OCI-LY7 (cell line): ENCODE measurements at regions of chr9 and their contacts with region 1.

Region 1: GRCh38 chr9:89602978-89603766 is 1.6 kb upstream of the GADD45G start:
- DNase-seq: peak; percentile 84
- H3K4me3 ChIP-seq: no peak overlapping the region
- H3K27ac ChIP-seq: no peak overlapping the region
- H3K4me1 ChIP-seq: peaks cover 13% of the 10 kb centered on the region
- CTCF ChIP-seq: peak; percentile 93

Region 2: GRCh38 chr9:89564352-89564878 is 38.8 kb before region 1 on chr9:
- CTCF ChIA-PET with region 1: no interaction called
- POLR2A ChIA-PET with region 1: no interaction called
- intact Hi-C with region 1: no loop called
- DNase-seq: peak; percentile 62
- H3K4me3 ChIP-seq: no peak overlapping the region
- H3K27ac ChIP-seq: no peak overlapping the region
- H3K4me1 ChIP-seq: peaks cover 3% of the 10 kb centered on the region
- CTCF ChIP-seq: peak; percentile 51; the same call in 1 of the 2 replicates

Region 3: DNA sequence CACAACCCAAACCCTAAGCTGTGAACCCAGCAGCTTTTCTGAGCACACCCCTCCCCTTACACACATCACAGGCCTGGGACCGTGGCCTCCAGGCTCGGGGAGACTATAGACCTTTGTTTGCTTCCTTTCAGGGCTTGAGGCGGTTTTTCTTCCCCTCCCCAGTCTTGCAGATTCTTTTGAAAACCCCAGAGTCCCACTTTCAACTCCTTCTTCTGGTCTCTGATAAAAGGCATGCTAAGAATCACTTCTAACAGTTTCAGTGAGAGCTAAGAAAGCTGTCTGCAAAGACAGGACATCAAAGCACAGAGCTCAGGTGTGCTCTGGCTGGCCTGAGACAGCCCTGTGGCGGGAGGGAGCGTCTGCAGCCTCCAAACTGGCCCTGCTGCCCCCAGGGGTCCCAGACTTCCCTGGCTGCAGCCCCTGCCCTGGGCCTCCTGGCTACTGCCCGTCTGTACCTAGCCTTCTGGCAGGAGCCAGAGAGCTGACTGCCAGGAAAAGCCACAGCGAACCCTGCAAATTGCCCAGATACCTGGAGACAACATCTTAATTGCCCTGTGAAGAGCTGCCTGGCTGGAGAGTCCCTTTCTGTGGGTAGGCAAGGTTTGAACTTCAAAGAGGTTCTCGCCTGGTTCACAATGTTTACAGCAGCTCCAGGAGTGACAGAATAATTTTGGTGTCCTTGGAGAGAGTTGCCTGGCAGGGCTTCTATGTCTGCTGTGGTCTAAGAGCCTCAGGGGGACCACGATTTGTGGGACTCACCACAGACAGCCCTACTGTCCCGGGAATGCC is 140.6 kb after region 1 on chr9:
- CTCF ChIA-PET with region 1: no interaction called
- POLR2A ChIA-PET with region 1: no interaction called
- intact Hi-C with region 1: loop called (anchors 5 kb)
- DNase-seq: peak; percentile 78
- H3K4me3 ChIP-seq: peak overlapping the region; percentile 24
- H3K27ac ChIP-seq: peak overlapping the region; percentile 93
- H3K4me1 ChIP-seq: peaks cover 80% of the 10 kb centered on the region
- CTCF ChIP-seq: no peak

Region 4: GRCh38 chr9:89879701-89880100 is 276.5 kb after region 1 on chr9:
- CTCF ChIA-PET with region 1: no interaction called
- POLR2A ChIA-PET with region 1: no interaction called
- intact Hi-C with region 1: loop called (anchors 2 kb)
- DNase-seq: no peak
- H3K4me3 ChIP-seq: no peak overlapping the region
- H3K27ac ChIP-seq: no peak overlapping the region
- H3K4me1 ChIP-seq: no peaks in the 10 kb centered on the region
- CTCF ChIP-seq: no peak

Region 5: DNA sequence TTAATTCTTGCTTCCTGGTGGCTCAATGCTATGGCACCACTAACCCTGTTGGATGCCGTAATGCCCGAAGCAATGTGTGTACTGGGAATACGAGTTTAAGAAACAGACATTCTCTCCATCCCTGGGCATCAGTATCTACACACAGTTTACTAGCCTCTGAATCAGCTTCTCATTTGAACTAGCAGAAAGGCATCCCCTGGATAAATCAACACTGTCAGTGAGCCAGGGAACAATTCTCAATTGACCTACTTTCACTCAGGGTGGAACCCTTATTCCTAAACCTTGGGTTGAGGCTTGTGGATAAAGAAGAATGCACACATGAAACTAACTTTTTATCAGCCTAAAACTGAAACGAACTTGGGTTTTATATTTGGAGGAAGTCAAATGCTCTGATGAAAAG is 332.6 kb after region 1 on chr9:
- CTCF ChIA-PET with region 1: no interaction called
- POLR2A ChIA-PET with region 1: no interaction called
- intact Hi-C with region 1: loop called (anchors 5 kb)
- DNase-seq: no peak
- H3K4me3 ChIP-seq: no peak overlapping the region
- H3K27ac ChIP-seq: no peak overlapping the region
- H3K4me1 ChIP-seq: no peaks in the 10 kb centered on the region
- CTCF ChIP-seq: no peak

Region 6: DNA sequence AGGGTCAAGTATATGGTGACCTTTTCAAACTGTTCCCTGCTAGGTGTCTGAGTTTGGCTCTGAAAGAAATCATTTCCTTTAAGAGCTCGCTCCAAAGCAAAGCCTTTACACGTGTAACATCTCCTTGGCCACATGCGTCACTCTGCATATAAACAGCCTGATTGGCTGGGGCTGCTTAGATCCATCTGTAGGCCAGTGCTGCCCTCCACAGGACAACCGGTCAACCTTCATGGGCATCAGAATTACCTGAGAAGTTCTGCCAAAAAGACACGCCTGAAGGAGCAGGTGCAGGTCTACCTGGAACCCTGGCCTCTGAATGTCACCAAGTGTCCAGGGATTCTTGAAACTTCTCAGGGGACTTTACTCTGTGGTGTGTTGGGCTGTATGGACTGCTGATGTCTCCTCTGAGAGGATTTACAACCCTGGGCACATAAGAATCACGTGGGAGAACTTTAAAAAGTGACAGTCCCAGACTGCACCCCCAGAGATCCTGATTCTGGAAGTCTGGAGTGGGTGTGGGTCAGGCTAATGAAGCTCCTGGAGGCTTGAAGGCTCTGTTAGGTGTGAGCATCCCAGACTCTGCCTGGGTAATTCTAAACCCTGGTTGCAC is 499.2 kb after region 1 on chr9:
- CTCF ChIA-PET with region 1: interaction called, 8 read pairs
- POLR2A ChIA-PET with region 1: no interaction called
- intact Hi-C with region 1: loop called (anchors 1 kb)
- DNase-seq: peak; percentile 86
- H3K4me3 ChIP-seq: no peak overlapping the region
- H3K27ac ChIP-seq: no peak overlapping the region
- H3K4me1 ChIP-seq: no peaks in the 10 kb centered on the region
- CTCF ChIP-seq: peak; percentile 86